Heart right ventricle (tissue), 16 donors: ENCODE measurements at regions of chr10 and their contacts with region 1.

Region 1: DNA sequence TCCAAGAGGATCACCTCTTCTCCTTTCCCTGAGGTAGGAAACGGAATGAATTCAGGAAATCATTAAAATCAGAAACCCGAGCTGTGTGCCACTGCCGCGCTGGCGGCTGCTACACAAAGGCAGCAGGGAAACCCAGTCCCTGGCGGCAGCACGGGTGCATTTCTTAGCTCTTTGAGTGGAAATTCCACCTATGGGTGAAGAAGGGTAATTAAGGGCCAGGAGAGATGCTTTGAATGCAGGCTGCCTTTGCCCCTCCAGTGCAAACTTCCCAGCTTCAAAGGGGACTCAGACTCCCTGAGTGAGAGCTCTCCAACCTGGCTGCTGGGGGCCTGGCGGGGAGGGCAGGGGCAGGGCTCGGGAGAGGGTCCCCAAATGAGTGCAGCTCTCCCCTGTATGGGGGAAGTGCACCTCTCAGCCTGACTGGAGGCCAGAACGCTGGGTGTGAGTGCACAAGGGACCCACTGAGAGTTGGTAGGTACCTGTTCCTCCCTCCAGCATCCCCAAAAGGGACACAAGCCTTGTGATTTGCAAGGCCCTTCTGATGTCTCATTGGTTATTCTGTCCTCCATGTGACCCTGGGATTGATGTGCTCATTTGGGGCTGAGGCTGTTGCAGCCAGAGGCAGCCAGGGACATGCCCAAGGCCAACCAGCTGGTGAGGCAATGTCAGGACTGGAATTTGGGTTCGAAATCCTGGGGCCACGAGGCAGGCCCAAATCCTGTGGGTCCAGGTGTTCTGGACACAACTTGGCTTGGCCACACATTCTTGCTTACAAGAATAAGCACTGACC is 16.3 kb upstream of the ZMIZ1 start:
- DNase-seq: no peak
- ATAC-seq: no peak
- H3K4me3 ChIP-seq: no peak overlapping the region
- H3K27ac ChIP-seq: no peak overlapping the region
- H3K4me1 ChIP-seq: peaks cover 0 to 27% (median 9%) of the 10 kb centered on the region in 9 donors
- H3K27me3 ChIP-seq: no peaks in the 10 kb centered on the region
- CTCF ChIP-seq: peak in 1 of 9 donors; percentile 11

Region 2: GRCh38 chr10:77504873-77505257 is 1547.6 kb before region 1 on chr10:
- intact Hi-C with region 1: loop called in 1 of 10 experiments (anchors 5 kb)
- DNase-seq: no peak
- ATAC-seq: no peak
- H3K4me3 ChIP-seq: no peak overlapping the region
- H3K27ac ChIP-seq: no peak overlapping the region
- H3K4me1 ChIP-seq: peaks cover 0 to 8% (median 0%) of the 10 kb centered on the region in 9 donors
- H3K27me3 ChIP-seq: peaks cover 0 to 24% (median 5%) of the 10 kb centered on the region in 7 donors
- CTCF ChIP-seq: no peak

Region 3: DNA sequence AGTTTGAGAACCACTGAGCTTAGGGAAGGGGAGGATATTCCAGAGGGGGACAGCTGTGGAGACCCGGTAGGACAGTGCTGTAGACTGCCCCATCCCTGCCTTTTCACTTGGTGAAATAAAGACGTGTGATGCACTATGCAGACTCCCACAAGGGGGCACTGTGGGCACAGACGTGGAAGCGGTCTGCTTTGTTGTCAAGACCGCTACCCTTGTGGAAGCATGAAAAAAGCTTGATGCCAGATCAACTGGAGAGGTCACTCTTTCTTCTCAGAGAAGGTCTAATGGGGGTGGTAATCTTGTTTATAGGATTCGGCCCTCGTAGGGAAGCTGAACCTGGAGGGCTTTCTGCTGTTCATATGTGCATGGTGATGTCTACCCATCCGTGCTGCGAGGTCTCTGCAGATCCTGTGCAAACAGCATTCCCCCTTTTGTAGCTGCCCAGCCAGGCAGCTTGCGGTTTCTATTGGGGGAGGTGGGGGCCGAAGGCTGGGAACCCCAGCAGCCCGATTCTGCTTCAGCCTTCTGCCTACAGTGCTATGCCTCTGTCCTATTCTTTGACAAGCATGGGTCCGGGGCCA is 1005.1 kb before region 1 on chr10:
- intact Hi-C with region 1: loop called in 1 of 10 experiments (anchors 5 kb)
- DNase-seq: peak; percentile 85 to 87
- ATAC-seq: peak; percentile 72 to 91 (median 87)
- H3K4me3 ChIP-seq: no peak overlapping the region
- H3K27ac ChIP-seq: no peak overlapping the region
- H3K4me1 ChIP-seq: peaks cover 0 to 19% (median 12%) of the 10 kb centered on the region in 9 donors
- H3K27me3 ChIP-seq: no peaks in the 10 kb centered on the region
- CTCF ChIP-seq: peak; percentile 80 to 93 (median 90)

Region 4: DNA sequence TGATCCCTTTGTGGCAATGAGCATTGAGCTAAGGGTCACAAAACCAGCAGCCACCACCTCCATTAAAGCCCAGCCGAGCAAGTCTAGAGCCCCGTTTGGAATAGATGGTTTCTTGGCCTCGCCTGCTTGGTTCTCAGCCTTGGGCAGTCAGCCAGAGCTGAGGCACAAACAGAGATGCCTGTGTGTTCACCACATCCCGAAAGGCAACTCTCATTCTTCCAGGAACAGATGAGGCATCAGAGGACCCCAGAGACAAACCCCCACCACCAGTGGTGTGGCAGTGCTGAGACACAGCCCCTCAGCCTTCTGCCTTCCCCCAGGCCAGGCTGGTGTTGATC is 187.0 kb before region 1 on chr10:
- intact Hi-C with region 1: loop called in 1 of 10 experiments (anchors 10 kb)
- DNase-seq: no peak
- ATAC-seq: no peak
- H3K4me3 ChIP-seq: no peak overlapping the region
- H3K27ac ChIP-seq: no peak overlapping the region
- H3K4me1 ChIP-seq: peaks cover 0 to 8% (median 0%) of the 10 kb centered on the region in 9 donors
- H3K27me3 ChIP-seq: peaks cover 0 to 6% (median 0%) of the 10 kb centered on the region in 7 donors
- CTCF ChIP-seq: no peak